ENCODE measurements at regions of chr22 and their contacts with region 1.

Region 1: GRCh38 chr22:24938741-24939341 is 7.7 kb downstream of the LHFPL7 start:
- DNase-seq: peak in 1 of 2 experiments; percentile 58
- H3K4me3 ChIP-seq: no peak overlapping the region
- H3K27ac ChIP-seq: no peak overlapping the region
- H3K4me1 ChIP-seq: peaks cover 2 to 6% (median 3%) of the 10 kb centered on the region in 4 experiments; a peak in 4 of 7 replicates
- H3K27me3 ChIP-seq: no peaks in the 10 kb centered on the region
- CTCF ChIP-seq: peak in 2 of 3 experiments; percentile 80 to 81; a peak in 3 of 4 replicates
- EP300 ChIP-seq: no peak
- POLR2A ChIP-seq: no peak
- RAD21 ChIP-seq: peak; percentile 85 to 90

Region 2: DNA sequence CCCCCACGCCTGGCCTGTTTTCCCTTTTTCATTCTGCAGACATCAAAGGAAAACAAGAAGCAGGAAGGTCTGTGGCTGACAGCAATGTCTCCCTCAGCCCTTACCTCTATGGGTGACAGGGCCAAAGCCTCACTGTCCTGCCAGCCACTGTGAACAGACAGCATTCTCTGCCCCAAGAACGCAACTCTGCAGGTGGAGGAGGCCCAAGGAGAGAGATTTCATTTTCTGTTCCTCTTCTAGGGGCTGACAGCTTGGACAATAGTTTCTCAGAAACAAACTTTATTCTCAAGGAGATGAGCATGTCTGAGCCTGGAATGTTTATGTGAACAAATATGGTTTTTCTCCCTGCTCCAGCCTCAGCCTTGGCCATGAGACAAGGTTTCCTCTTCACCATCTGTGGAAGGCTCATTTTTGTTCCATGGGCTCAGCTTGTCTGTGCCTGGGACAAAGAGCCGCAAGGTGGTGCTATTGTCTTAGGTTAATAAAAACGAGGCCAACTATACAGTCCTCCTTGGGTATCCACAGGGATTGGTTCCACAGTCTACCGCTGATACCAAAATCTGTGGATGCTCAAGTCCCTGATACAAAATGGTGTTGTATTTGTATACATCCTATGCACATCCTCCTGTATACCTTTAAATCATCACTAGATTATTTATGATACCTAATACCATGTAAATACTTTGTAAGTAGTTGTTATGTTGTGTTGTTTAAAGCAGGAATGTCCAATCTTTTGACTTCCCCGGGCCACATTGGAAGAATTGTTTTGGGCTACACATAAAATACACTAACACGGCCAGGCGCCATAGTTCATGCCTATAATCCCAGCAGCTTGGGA is 170.1 kb before region 1 on chr22:
- CTCF ChIA-PET with region 1: interaction called, 11 read pairs
- POLR2A ChIA-PET with region 1: no interaction called
- DNase-seq: peak in 1 of 2 experiments; percentile 76
- H3K4me3 ChIP-seq: no peak overlapping the region
- H3K27ac ChIP-seq: no peak overlapping the region
- H3K4me1 ChIP-seq: peaks cover 0 to 3% (median 1%) of the 10 kb centered on the region in 4 experiments; a peak in 2 of 7 replicates
- H3K27me3 ChIP-seq: no peaks in the 10 kb centered on the region
- CTCF ChIP-seq: peak; percentile 47 to 82 (median 65)
- EP300 ChIP-seq: no peak
- POLR2A ChIP-seq: no peak
- RAD21 ChIP-seq: peak; percentile 82 to 85

Region 3: GRCh38 chr22:24875862-24876506 is 62.9 kb before region 1 on chr22:
- CTCF ChIA-PET with region 1: no interaction called
- POLR2A ChIA-PET with region 1: no interaction called
- DNase-seq: peak; percentile 38 to 80
- H3K4me3 ChIP-seq: no peak overlapping the region
- H3K27ac ChIP-seq: no peak overlapping the region
- H3K4me1 ChIP-seq: no peaks in the 10 kb centered on the region
- H3K27me3 ChIP-seq: no peaks in the 10 kb centered on the region
- CTCF ChIP-seq: no peak
- EP300 ChIP-seq: no peak
- POLR2A ChIP-seq: no peak
- RAD21 ChIP-seq: no peak

Region 4: GRCh38 chr22:24951942-24952836 is 13.3 kb after region 1 on chr22 and contains the start of gene KIAA1671:
- CTCF ChIA-PET with region 1: interaction called, 76 read pairs
- POLR2A ChIA-PET with region 1: interaction called, 4 read pairs
- DNase-seq: peak; percentile 84 to 98
- H3K4me3 ChIP-seq: peak within 1 kb of the TSS; percentile 70 to 83 (median 77)
- H3K27ac ChIP-seq: peak within 1 kb of the TSS; percentile 89
- H3K4me1 ChIP-seq: peaks cover 5 to 22% (median 8%) of the 10 kb centered on the region in 4 experiments
- H3K27me3 ChIP-seq: peaks cover 0 to 3% (median 1%) of the 10 kb centered on the region in 4 experiments; a peak in 2 of 7 replicates
- CTCF ChIP-seq: peak; percentile 95 to 99 (median 95)
- EP300 ChIP-seq: 0 out of 3 replicates have a peak, but pooled peaks of 1 of the 2 experiments have one; percentile 15
- POLR2A ChIP-seq: no peak
- RAD21 ChIP-seq: peak; percentile 92 to 94
- total RNA-seq, gene KIAA1671: 22.6 and 23.9 TPM in 2 replicates

Region 5: DNA sequence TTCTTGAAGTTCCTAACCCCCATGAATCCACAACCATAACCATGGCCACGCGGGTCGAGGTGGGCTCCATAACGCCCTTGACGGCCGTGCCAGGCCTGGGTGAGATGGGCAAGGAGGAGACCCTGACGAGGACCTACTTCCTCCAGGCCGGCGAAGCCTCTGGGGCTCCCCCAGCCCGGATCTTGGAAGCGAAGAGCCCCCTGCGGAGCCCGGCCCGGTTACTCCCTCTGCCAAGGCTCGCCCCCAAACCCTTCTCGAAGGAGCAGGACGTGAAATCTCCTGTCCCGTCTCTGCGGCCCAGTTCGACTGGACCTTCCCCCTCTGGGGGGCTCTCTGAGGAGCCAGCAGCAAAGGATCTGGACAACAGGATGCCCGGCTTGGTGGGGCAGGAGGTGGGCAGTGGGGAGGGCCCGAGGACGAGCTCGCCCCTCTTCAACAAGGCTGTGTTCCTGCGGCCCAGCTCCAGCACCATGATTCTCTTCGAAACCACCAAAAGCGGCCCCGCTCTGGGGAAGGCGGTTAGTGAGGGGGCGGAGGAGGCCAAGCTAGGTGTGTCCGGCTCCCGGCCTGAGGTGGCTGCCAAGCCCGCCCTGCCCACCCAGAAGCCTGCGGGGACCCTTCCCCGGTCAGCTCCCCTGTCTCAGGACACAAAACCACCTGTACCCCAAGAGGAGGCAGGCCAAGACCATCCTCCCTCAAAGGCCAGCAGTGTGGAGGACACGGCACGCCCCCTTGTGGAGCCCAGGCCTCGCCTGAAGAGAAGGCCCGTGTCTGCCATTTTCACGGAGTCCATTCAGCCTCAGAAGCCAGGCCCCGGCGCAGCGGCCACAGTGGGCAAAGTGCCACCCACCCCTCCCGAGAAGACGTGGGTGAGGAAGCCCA is 89.4 kb after region 1 on chr22:
- CTCF ChIA-PET with region 1: interaction called, 70 read pairs
- POLR2A ChIA-PET with region 1: no interaction called
- DNase-seq: peak in 1 of 2 experiments; percentile 88
- H3K4me3 ChIP-seq: no peak overlapping the region
- H3K27ac ChIP-seq: no peak overlapping the region
- H3K4me1 ChIP-seq: no peaks in the 10 kb centered on the region; a peak in 1 of 7 replicates
- H3K27me3 ChIP-seq: no peaks in the 10 kb centered on the region
- CTCF ChIP-seq: peak; percentile 85 to 91 (median 85)
- EP300 ChIP-seq: no peak
- POLR2A ChIP-seq: no peak
- RAD21 ChIP-seq: peak; percentile 85 to 91

Region 6: DNA sequence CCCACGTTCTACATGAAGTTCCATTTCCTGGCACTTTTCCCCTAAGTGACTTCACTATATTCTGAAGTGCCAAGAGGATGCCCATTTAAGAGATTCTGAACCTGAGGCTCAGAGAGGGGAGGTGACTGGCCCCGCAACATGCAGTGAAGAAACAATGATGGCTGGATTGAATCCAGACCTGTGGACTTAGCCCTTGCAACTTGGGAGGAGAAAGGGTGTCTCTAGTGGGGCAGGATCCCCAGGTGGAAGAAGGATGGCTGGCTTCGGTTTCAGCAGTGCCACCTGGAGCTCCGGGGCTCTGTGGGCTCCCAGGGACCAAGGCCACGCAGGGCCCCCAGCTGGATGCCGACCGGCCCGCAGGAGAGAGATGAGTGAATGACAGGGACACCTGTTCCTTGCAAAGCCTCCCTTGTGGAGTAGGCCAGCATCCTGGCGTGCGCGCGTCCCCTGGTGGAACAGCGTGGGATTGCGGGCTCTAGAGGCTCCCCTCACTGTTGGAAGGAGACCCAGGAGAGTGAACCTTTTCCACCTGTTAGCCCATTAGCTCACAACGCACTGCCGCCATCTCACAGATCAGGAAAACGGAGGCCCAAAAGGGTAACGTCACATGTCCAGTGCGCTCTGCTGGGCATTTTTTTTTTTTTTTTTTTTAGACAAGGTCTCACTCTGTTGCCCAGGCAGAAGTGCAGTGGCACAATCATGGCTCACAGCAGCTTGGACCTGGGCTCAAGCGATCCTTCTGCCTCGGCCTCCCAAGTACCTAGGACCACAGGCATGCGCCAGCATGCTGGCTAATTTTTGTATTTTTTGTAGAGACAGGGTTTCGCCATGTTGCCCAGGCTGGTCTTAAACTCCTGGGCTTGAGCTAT is 118.4 kb after region 1 on chr22:
- CTCF ChIA-PET with region 1: interaction called, 221 read pairs
- POLR2A ChIA-PET with region 1: interaction called, 5 read pairs
- DNase-seq: peak; percentile 64 to 99
- H3K4me3 ChIP-seq: no peak overlapping the region
- H3K27ac ChIP-seq: no peak overlapping the region
- H3K4me1 ChIP-seq: peaks cover 0 to 7% (median 2%) of the 10 kb centered on the region in 4 experiments; a peak in 3 of 7 replicates
- H3K27me3 ChIP-seq: no peaks in the 10 kb centered on the region
- CTCF ChIP-seq: peak; percentile 93 to 99 (median 96)
- EP300 ChIP-seq: no peak
- POLR2A ChIP-seq: no peak
- RAD21 ChIP-seq: peak; percentile 90 to 92

Measured in H1 (cell line).